Breast epithelium (tissue), 4 donors: ENCODE measurements at regions of chr14 and their contacts with region 1.

Region 1: GRCh38 chr14:68911594-68912227 is 67.4 kb downstream of the ACTN1 start:
- DNase-seq: peak; percentile 50 to 70
- H3K4me3 ChIP-seq: no peak overlapping the region
- H3K27ac ChIP-seq: peak overlapping the region; percentile 8 to 66
- H3K4me1 ChIP-seq: peaks cover 6 to 7% of the 10 kb centered on the region in 2 donors
- H3K27me3 ChIP-seq: no peaks in the 10 kb centered on the region
- CTCF ChIP-seq: peak; percentile 95 to 98 (median 97)
- POLR2A ChIP-seq: no peak

Region 2: GRCh38 chr14:68884031-68885030 is 27.4 kb before region 1 on chr14:
- intact Hi-C with region 1: no loop called
- DNase-seq: no peak
- H3K4me3 ChIP-seq: no peak overlapping the region
- H3K27ac ChIP-seq: peak overlapping the region; percentile 10 to 52
- H3K4me1 ChIP-seq: no peaks in the 10 kb centered on the region
- H3K27me3 ChIP-seq: no peaks in the 10 kb centered on the region
- CTCF ChIP-seq: no peak
- POLR2A ChIP-seq: no peak

Region 3: GRCh38 chr14:68979021-68979782 is 67.5 kb after region 1 on chr14 and contains the start of gene ACTN1:
- intact Hi-C with region 1: no loop called
- DNase-seq: peak; percentile 93 to 98
- H3K4me3 ChIP-seq: peak within 1 kb of the TSS; percentile 80 to 96 (median 85)
- H3K27ac ChIP-seq: peak within 1 kb of the TSS; percentile 98 to 99
- H3K4me1 ChIP-seq: peaks cover 0 to 20% of the 10 kb centered on the region in 2 donors
- H3K27me3 ChIP-seq: no peaks in the 10 kb centered on the region
- CTCF ChIP-seq: no peak
- POLR2A ChIP-seq: peak; percentile 64
- total RNA-seq, gene ACTN1: 75.0 to 295 (median 290) TPM

Region 4: DNA sequence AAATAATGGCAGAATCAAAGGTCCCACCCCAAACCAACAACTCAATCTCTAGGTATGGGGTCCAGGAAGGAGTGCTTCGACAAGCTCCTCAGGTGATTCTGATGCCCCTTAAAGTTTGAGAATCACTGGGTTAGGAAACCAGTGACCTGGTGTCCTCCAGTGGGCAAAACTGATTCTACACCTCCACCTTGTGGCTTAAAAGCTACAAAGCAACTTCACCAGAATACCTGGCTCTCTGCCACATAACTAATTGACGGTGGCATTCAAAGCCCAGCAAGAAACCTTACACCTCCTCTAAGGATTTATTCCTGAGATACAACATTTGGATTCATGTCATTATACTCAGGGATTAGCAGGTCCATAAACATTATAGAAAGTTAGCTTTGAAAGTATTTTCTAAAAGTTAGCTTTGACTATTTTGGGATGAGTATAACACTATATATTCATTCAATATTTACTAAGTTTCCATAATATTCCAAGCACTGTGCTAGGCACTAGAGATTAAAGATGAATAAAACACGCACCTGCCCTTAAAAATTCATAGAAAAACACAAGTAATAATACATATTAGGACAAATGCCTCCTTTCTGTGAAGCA is 195.8 kb after region 1 on chr14:
- intact Hi-C with region 1: loop called (anchors 10 kb)
- DNase-seq: peak in 1 of 2 donors; percentile 44
- H3K4me3 ChIP-seq: no peak overlapping the region
- H3K27ac ChIP-seq: no peak overlapping the region
- H3K4me1 ChIP-seq: no peaks in the 10 kb centered on the region
- H3K27me3 ChIP-seq: no peaks in the 10 kb centered on the region
- CTCF ChIP-seq: peak; percentile 77 to 93 (median 82)
- POLR2A ChIP-seq: no peak